ENCODE measurements at regions of chr18 and their contacts with region 1.

Region 1: DNA sequence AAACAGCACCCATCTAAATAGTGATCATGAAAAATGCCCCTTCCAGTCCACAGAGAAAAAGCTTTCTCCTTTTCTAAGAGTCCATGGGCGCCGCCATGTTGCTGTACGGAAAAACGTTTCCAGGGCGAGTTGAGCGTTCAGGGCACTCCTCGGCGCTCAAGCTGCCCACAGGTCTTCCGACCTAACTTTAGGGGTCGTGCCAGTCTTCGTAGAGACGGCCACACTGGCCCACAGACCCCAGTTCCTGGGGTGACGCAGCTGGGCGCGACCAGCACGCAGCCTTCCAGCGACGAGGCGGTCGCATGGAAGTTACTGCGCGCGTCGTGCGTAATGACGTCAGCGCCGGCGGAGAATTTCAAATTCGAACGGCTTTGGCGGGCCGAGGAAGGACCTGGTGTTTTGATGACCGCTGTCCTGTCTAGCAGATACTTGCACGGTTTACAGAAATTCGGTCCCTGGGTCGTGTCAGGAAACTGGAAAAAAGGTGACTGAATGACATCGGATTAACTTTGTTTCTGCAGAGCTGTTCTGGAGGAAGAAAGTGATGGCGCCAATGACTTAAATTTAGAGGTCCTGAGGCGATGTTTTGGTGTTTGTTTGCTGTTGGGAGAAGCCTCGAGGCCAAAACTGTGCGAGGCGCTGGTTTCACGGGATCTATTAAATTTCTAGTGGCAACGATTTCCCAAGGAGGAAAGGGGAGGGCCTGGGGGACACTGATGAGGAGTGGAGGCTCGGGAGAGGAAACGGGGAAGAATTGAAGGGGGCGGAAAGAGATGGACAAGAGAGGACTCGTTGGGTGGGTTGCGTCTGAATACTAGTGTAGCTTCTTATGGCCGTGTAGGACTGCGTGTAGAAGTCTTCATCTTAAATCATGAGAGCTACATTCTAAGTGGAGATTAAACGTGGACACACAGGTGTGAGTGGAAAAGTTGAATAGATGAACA is at the starts of genes METTL4 and NDC80:
- DNase-seq: peak; percentile 96
- H3K4me3 Mint-ChIP-seq: peak within 1 kb of the TSS; percentile 97
- H3K27ac Mint-ChIP-seq: peak within 1 kb of the TSS; percentile 98
- H3K4me1 Mint-ChIP-seq: peaks cover 50% of the 10 kb centered on the region
- H3K27me3 Mint-ChIP-seq: no peaks in the 10 kb centered on the region
- total RNA-seq, gene METTL4: 17.7 and 18.4 TPM in 2 replicates
- total RNA-seq, gene NDC80: 42.4 and 50.5 TPM in 2 replicates

Region 2: DNA sequence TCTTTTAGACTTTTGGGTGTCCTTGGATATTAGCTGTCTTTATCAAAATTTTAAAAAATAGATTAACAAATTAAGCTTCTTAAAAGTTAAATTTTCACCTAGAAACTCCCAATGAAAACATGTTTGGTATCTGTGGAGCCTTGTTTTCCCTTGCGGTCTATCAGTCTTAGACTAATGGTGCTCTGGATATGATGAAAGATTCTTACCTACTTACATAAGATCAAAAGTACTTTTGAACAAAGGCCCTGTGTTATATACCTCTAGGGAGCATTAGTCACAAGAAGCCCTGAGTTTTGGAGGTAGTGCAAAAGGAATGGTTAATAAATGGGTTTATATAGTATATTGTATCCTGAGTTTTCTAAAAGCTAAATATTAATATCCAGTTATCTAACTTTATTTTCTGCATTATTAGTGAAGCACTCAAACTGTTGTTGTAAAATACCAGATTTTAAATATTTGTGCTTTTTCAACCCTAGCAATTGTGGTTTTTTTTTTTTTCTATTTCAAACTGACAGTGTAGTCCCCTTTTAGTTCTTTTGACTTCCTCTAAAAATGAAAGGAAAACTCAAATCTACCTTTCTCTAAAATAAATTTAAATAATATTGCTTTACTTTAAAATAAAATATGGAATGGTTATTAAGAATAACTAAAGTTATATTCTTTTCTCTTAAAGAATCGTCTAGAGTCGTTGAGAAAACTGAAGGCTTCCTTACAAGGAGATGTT is 18.0 kb after region 1 on chr18:
- intact Hi-C with region 1: loop called (anchors 2 kb)
- DNase-seq: no peak
- H3K4me3 Mint-ChIP-seq: peak overlapping the region; percentile 65
- H3K27ac Mint-ChIP-seq: peak overlapping the region; percentile 94
- H3K4me1 Mint-ChIP-seq: peaks cover 42% of the 10 kb centered on the region
- H3K27me3 Mint-ChIP-seq: no peaks in the 10 kb centered on the region

Region 3: GRCh38 chr18:2606335-2606734 is 34.9 kb after region 1 on chr18:
- intact Hi-C with region 1: loop called (anchors 2 kb)
- DNase-seq: no peak
- H3K4me3 Mint-ChIP-seq: peak overlapping the region; percentile 70
- H3K27ac Mint-ChIP-seq: peak overlapping the region; percentile 88
- H3K4me1 Mint-ChIP-seq: peaks cover 44% of the 10 kb centered on the region
- H3K27me3 Mint-ChIP-seq: no peaks in the 10 kb centered on the region

Region 4: DNA sequence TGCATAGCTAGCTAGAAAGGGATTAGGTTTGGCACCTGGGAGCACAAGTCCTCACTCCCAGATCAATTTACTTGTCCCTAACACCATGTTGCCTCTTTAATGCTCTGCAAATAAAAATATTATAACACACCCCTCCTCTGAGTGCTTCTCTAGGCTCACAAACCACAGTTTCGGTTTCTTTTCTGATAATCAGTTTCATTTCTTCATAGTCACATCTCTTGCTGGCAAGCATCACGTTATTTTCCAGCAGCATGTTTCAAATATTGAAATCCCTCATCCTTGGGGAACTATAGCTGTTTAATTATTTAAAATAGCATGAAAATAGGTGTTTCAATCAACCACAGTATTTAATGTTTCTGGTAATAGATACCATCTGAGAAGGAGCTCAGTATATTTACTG is 70.2 kb after region 1 on chr18:
- intact Hi-C with region 1: loop called (anchors 2 kb)
- DNase-seq: peak; percentile 75
- H3K4me3 Mint-ChIP-seq: peak overlapping the region; percentile 70
- H3K27ac Mint-ChIP-seq: peak overlapping the region; percentile 87
- H3K4me1 Mint-ChIP-seq: peaks cover 43% of the 10 kb centered on the region
- H3K27me3 Mint-ChIP-seq: no peaks in the 10 kb centered on the region

Region 5: GRCh38 chr18:2846636-2847364 is 275.3 kb after region 1 on chr18 and contains the start of gene EMILIN2:
- intact Hi-C with region 1: loop called (anchors 5 kb)
- DNase-seq: peak; percentile 80
- H3K4me3 Mint-ChIP-seq: peak within 1 kb of the TSS; percentile 88
- H3K27ac Mint-ChIP-seq: peak within 1 kb of the TSS; percentile 89
- H3K4me1 Mint-ChIP-seq: peaks cover 36% of the 10 kb centered on the region
- H3K27me3 Mint-ChIP-seq: peaks cover 49% of the 10 kb centered on the region
- total RNA-seq, gene EMILIN2: 32.4 and 35.5 TPM in 2 replicates

Region 6: GRCh38 chr18:3261371-3262246 is 690.1 kb after region 1 on chr18 and contains the start of gene MYL12B:
- intact Hi-C with region 1: loop called (anchors 2 kb)
- DNase-seq: peak; percentile 94
- H3K4me3 Mint-ChIP-seq: peak within 1 kb of the TSS; percentile 89
- H3K27ac Mint-ChIP-seq: peak within 1 kb of the TSS; percentile 98
- H3K4me1 Mint-ChIP-seq: peaks cover 68% of the 10 kb centered on the region
- H3K27me3 Mint-ChIP-seq: no peaks in the 10 kb centered on the region
- total RNA-seq, gene MYL12B: 239 and 245 TPM in 2 replicates

Measured in activated CD4-positive, alpha-beta T cell treated with anti-CD3 and anti-CD28 coated beads, Interleukin-2, amount 10 ng/mL, durations not matched to agents 24 days and 14 days (primary cell).